Right lobe of liver (tissue), 6 donors: ENCODE measurements at regions of chr12 and their contacts with region 1.

Region 1: GRCh38 chr12:104201238-104202001 is 14.2 kb upstream of the TXNRD1 start:
- DNase-seq: peak in 1 of 3 donors; percentile 54
- ATAC-seq: peak; percentile 88 to 91 (median 89)
- H3K4me3 ChIP-seq: no peak overlapping the region
- H3K27ac ChIP-seq: no peak overlapping the region
- H3K4me1 ChIP-seq: no peaks in the 10 kb centered on the region
- H3K27me3 ChIP-seq: no peaks in the 10 kb centered on the region
- CTCF ChIP-seq: peak; percentile 82 to 90 (median 86)
- POLR2A ChIP-seq: no peak

Region 2: GRCh38 chr12:104314242-104314614 is 112.8 kb after region 1 on chr12:
- intact Hi-C with region 1: no loop called
- DNase-seq: no peak
- ATAC-seq: peak in 1 of 4 donors; percentile 30
- H3K4me3 ChIP-seq: no peak overlapping the region
- H3K27ac ChIP-seq: no peak overlapping the region
- H3K4me1 ChIP-seq: no peaks in the 10 kb centered on the region
- H3K27me3 ChIP-seq: no peaks in the 10 kb centered on the region
- CTCF ChIP-seq: no peak
- POLR2A ChIP-seq: no peak

Region 3: GRCh38 chr12:104358347-104359003 is 157.1 kb after region 1 on chr12:
- intact Hi-C with region 1: loop called (anchors 5 kb)
- DNase-seq: peak; percentile 56 to 64 (median 60)
- ATAC-seq: peak; percentile 91 to 95 (median 94)
- H3K4me3 ChIP-seq: no peak overlapping the region
- H3K27ac ChIP-seq: no peak overlapping the region
- H3K4me1 ChIP-seq: no peaks in the 10 kb centered on the region
- H3K27me3 ChIP-seq: no peaks in the 10 kb centered on the region
- CTCF ChIP-seq: peak; percentile 84 to 91 (median 88)
- POLR2A ChIP-seq: no peak